Activated naive CD4-positive, alpha-beta T cell treated with anti-CD3 and anti-CD28 coated beads, Interleukin-2, amount 10 ng/mL, durations not matched to agents 7 days and 5 days (primary cell): ENCODE measurements at regions of chr1 and their contacts with region 1.

Region 1: GRCh38 chr1:205321164-205321958 is at the start of gene NUAK2:
- DNase-seq: peak; percentile 88
- H3K4me3 Mint-ChIP-seq: peak within 1 kb of the TSS; percentile 90
- H3K27ac Mint-ChIP-seq: peak within 1 kb of the TSS; percentile 87
- H3K4me1 Mint-ChIP-seq: peaks cover 65% of the 10 kb centered on the region
- H3K27me3 Mint-ChIP-seq: peaks cover 27% of the 10 kb centered on the region

Region 2: DNA sequence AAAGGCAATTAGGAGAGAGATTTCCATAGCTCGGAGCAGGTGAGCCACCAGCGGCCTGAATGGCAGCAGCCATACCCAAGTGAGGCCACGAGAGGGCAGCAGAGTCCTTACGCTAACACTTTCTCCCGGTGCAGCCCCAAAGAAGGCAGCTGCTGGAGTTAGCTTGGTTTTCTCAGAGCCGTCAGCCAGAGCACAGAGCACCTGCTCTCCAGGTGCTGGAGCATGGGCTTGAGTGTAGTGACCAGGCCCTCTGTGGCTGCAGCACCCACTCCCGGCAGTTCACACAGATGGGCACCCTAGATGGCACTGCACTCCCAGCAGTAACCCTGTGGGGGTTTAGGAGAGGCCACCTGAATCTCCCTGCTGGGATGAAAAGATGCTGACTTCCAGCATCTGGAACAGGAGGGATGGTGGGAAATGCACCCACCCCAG is 47.8 kb before region 1 on chr1:
- CTCF ChIA-PET with region 1: interaction called, 1,108 read pairs
- DNase-seq: peak; percentile 92
- H3K4me3 Mint-ChIP-seq: no peak overlapping the region
- H3K27ac Mint-ChIP-seq: peak overlapping the region; percentile 82
- H3K4me1 Mint-ChIP-seq: peaks cover 38% of the 10 kb centered on the region
- H3K27me3 Mint-ChIP-seq: peaks cover 26% of the 10 kb centered on the region

Region 3: DNA sequence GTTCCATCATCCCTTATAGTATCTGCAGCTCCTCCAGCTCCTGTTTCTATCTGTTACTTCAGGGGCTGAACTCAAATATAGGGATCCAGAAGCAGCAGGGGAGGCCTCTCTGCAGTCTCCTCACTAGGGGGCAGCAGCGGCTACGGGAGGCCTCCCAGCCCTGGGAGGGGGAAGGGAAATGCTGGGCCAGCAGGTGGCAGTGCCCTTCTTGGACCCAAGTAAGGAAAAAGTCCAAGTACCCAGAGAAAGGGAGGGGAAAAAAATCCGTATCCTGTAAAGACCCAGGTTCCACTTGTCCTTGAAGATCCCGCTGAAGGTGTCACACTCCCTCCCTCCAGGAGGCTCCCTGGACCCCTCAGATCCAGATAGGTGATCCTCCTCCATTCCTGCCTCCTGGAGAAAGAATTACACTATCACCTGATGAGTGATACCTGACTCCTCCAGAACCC is 14.3 kb after region 1 on chr1:
- CTCF ChIA-PET with region 1: interaction called, 40 read pairs
- DNase-seq: peak; percentile 88
- H3K4me3 Mint-ChIP-seq: no peak overlapping the region
- H3K27ac Mint-ChIP-seq: no peak overlapping the region
- H3K4me1 Mint-ChIP-seq: no peaks in the 10 kb centered on the region
- H3K27me3 Mint-ChIP-seq: peaks cover 92% of the 10 kb centered on the region

Region 4: GRCh38 chr1:205749234-205750137 is 428.1 kb after region 1 on chr1:
- CTCF ChIA-PET with region 1: no interaction called
- DNase-seq: peak; percentile 96
- H3K4me3 Mint-ChIP-seq: peak overlapping the region; percentile 93
- H3K27ac Mint-ChIP-seq: peak overlapping the region; percentile 98
- H3K4me1 Mint-ChIP-seq: peaks cover 50% of the 10 kb centered on the region
- H3K27me3 Mint-ChIP-seq: peaks cover 4% of the 10 kb centered on the region